Colonic mucosa (tissue), 4 donors: ENCODE measurements at regions of chr12 and their contacts with region 1.

Region 1: GRCh38 chr12:111298582-111299436 is 70.1 kb downstream of the PHETA1 start:
- DNase-seq: peak; percentile 32
- H3K4me3 ChIP-seq: no peak overlapping the region
- H3K27ac ChIP-seq: no peak overlapping the region
- H3K4me1 ChIP-seq: no peaks in the 10 kb centered on the region
- H3K27me3 ChIP-seq: no peaks in the 10 kb centered on the region
- CTCF ChIP-seq: peak; percentile 67

Region 2: DNA sequence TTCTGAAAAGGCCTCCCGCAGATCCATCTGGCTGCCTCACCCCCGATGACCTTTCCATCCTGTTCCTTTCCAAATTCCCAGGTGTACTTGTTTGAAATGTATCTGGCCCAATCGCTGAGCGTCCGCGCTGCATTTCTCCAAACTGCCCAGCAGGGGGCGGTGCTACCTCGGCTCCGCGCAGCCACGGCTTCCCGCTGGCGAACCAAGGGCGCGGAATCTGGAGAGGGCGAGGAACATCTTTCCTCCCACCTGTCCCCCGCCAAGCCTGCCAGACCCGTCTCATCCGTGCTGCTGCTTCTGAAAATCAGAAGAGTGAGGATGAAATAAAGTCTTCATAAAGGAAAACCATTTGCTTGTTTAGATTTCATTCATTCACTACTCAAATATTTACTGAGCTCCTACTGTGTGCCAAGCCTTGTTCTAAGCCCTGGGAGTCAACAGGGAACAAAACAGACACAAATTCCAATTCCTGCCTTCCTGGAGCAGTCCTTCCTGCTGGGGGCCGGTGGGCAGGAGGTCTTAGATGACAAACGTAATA is 361.6 kb before region 1 on chr12:
- intact Hi-C with region 1: loop called (anchors 5 kb)
- DNase-seq: peak; percentile 41
- H3K4me3 ChIP-seq: no peak overlapping the region
- H3K27ac ChIP-seq: no peak overlapping the region
- H3K4me1 ChIP-seq: no peaks in the 10 kb centered on the region
- H3K27me3 ChIP-seq: no peaks in the 10 kb centered on the region
- CTCF ChIP-seq: peak; percentile 89

Region 3: DNA sequence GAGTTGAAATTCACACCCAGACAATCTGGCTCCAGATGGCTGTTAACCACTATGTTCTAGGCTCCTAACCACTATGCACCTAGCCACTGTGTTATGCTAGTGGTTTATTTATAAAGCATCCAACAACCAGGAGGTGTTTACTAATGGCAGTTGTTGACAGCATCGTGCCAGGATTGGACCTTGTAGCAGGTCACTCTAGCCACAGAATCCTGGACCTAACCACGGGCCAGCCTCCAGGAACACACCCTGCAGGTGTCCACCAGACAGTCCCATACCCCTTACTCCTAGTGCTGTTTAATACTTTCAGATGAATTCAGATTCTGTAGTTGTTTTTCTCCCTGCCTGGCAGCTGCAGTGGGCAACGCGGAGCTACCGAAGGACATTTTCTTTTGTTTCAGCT is 269.1 kb before region 1 on chr12:
- intact Hi-C with region 1: loop called (anchors 5 kb)
- DNase-seq: no peak
- H3K4me3 ChIP-seq: no peak overlapping the region
- H3K27ac ChIP-seq: no peak overlapping the region
- H3K4me1 ChIP-seq: no peaks in the 10 kb centered on the region
- H3K27me3 ChIP-seq: peaks cover 23% of the 10 kb centered on the region
- CTCF ChIP-seq: no peak

Region 4: DNA sequence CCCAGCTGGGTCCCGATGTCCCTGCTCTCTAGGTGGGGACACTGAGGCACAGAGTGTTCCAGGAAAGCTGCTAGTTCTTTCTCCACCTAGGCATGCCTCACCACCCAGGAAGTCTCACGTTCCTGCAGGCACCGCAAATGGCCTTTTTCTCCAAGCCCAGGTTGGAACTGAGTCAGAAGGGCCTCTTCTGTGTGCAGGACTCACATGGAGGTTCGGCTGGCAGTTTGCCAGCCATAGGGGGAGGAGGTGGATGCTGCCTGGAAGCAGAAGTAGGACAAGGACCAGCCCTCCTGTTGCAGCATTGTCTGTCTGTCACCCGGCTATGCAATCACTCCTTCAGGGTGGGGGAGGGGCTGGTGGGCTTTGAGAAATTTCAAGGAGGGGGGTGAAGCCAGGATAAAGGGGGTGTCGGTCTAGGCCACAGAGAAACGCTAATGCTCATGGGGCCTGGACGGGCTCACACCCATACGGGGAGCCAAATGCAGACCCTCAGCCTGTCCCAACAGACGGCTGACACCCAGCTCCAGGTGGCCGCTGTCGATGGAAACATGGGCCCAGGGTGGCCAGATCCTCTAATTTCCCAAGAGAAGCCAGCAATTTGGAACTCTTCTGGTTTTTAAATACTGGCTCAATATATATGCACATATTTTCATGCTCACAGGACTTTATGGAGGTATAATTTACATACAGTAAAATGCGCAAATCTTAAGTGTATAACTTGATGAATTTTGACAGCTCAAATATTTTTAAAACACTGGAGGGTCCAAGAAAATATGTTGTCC is 50.4 kb before region 1 on chr12:
- intact Hi-C with region 1: no loop called
- DNase-seq: no peak
- H3K4me3 ChIP-seq: no peak overlapping the region
- H3K27ac ChIP-seq: no peak overlapping the region
- H3K4me1 ChIP-seq: no peaks in the 10 kb centered on the region
- H3K27me3 ChIP-seq: no peaks in the 10 kb centered on the region
- CTCF ChIP-seq: no peak